GM10248 (cell line): ENCODE measurements at regions of chr6 and their contacts with region 1.

Region 1: DNA sequence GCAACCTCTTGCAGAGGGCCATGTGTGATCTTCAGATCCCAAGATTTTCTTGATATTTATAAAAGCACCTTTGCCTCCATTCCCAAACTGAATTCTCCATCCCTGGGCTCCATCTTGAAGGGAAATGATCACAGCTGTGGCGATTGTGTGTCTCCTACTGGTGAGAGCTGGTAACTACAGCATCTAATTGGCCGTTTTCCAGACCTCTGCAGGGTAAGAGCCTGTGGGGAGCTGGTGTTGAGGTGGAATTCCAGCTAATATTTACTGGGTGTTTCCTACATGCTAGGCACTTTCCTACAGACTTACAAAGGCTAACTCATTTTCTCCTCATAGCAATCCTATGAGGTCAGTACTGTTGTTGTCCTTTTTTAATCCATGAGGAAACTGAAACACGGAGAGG is 59.2 kb upstream of the FNDC1 start:
- DNase-seq: no peak
- CTCF ChIP-seq: peak; percentile 59

Region 2: GRCh38 chr6:158999666-159000403 is 110.2 kb before region 1 on chr6 and contains the start of gene RSPH3:
- CTCF ChIA-PET with region 1: interaction called, 208 read pairs
- POLR2A ChIA-PET with region 1: no interaction called
- DNase-seq: peak; percentile 98
- CTCF ChIP-seq: peak; percentile 13

Region 3: DNA sequence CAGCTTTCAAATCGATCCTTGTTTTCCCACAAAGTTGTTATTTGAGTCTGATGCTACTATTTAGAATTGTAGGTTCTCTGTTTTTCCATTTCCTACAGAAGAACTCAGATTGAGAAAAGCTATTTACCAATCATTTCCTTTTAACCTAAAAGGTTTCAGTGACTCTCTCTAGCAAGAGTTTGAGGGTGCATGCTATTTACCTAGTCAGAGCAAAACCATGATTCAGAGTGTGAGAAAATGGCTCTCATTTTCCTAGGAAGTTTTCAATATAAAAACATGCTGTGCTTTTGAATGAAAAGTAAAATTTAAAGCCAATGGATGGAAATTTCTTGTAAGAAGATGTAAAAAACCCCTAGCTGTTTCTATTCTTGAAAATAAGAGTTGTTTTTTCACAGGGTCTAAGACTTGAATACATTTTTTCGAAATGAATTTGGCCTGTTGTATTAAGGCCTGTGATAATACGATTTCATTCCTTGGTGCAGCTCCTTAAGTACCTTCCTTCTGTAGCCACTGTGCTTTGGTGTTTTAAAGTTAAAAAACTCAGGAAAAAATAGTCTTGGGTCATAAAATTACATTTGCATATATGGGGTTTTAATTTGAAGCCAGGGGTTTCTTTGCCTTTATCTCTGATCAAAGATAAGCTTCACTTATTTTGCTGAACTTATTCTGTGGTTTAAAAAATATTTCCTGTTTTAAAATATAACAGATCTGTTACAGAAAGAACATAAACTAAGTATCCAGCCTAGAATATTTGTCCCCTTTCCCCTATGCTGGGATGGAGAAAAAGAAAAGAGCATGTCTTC is 92.1 kb before region 1 on chr6:
- CTCF ChIA-PET with region 1: interaction called, 26 read pairs
- POLR2A ChIA-PET with region 1: no interaction called
- DNase-seq: peak; percentile 45
- CTCF ChIP-seq: no peak

Region 4: GRCh38 chr6:159056003-159056402 is 54.0 kb before region 1 on chr6:
- CTCF ChIA-PET with region 1: interaction called, 19 read pairs
- POLR2A ChIA-PET with region 1: no interaction called
- DNase-seq: no peak
- CTCF ChIP-seq: no peak

Region 5: DNA sequence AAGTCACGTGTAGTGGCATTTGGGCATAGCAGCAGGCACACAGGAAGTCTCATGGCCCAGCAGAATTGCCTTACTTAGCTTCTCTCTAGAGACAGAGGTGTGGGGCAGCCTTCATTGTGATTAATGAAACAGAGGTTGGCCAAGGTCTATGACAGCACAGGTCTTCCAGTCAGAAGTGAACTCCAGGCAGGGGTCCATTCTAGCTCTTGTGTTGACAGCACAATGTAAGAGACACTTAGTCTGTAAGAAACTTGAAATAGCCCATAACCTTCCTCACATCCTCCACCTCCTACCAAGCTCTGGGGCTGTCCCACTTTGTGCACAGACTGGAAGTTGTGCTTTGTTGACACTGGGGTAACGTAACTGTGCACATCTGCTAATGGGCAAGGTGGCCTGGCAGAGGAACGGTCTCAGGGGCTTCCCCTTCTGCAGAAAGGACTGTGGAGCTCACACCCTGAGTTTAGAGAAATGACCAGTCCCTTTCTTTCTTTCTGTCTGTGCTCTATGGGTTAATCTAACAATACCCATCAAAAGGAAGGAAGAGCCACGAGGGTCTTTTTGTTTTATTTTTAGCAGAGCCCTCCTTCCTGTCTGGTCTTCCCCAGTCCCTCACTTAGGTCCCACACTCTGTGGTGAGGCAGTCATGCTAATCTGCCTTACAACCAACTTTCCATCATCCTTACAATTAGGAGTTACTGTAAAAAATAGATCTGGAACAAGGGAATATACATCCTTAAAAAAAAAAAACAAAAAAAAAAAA is 29.6 kb before region 1 on chr6:
- CTCF ChIA-PET with region 1: interaction called, 22 read pairs
- POLR2A ChIA-PET with region 1: no interaction called
- DNase-seq: no peak
- CTCF ChIP-seq: no peak

Region 6: DNA sequence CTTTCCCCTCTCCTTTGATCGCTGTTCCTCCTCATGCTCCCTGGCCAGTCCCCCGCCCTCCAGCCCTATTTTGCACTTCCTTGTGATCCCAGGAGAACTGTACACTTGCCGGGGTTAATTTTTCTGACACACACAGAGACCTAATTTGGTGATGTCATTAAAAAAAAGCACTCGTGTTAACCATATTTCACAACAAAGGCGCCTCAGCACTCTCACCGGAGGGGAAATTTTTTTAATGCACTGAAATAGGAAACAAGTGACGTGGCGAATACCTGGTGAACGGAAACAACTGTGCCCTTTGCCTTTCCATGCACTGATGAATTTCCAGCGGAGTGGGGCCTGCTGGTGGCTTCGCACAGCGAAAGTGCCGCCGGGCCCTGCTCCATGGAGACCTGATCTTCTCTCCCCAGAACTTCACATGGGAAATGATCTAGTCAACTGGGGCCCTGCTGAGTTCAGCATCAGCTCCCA is 11.3 kb before region 1 on chr6:
- CTCF ChIA-PET with region 1: interaction called, 101 read pairs
- POLR2A ChIA-PET with region 1: no interaction called
- DNase-seq: peak; percentile 48
- CTCF ChIP-seq: no peak

Region 7: DNA sequence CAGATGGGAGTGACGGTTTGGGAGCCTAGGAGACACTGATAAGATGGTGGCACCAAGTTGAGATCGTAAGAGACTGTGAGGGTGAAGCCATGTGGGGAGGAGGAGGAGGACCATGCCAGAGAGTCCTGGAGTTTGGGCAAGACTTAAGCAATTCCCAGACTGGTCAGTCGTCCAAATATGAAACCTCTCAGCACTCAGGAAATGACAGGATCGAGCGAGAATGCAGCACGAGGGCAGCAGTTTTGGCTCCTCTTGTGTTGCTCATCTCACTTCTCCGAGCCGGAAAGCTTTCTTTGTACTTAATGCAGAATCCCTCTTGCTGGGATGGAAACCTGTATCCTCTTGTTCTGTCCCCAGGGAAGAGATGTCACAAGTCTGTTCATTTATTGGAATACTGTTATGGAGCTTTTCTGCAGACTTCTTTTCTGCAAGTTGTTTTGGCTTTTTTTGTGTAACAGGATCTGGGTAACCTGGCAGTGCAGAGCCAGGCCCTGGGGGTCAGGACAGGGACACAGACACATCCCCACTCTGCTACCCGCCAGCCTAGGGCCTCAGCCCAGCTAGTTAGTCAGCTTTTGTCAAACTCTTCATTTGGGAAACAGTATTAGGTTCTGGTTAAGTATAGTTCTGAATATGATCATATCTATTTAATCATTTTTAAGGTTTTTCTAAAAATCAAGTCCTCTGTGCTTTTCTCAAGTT is 93.4 kb after region 1 on chr6:
- CTCF ChIA-PET with region 1: no interaction called
- POLR2A ChIA-PET with region 1: no interaction called
- DNase-seq: no peak
- CTCF ChIP-seq: no peak